ENCODE measurements at regions of chr7 and their contacts with region 1.

Region 1: GRCh38 chr7:141701489-141702046 is 398 bp downstream of the DENND11 start:
- DNase-seq: no peak
- H3K4me3 ChIP-seq: peak overlapping the region; percentile 65 to 84 (median 70)
- H3K27ac ChIP-seq: no peak overlapping the region
- H3K4me1 ChIP-seq: peaks cover 20% of the 10 kb centered on the region
- H3K27me3 ChIP-seq: no peaks in the 10 kb centered on the region
- CTCF ChIP-seq: no peak

Region 2: GRCh38 chr7:140966561-140967226 is 734.9 kb before region 1 on chr7:
- CTCF ChIA-PET with region 1: no interaction called
- dilution Hi-C with region 1: no loop called
- in situ Hi-C with region 1: no loop called
- intact Hi-C with region 1: no loop called
- DNase-seq: no peak
- H3K4me3 ChIP-seq: no peak overlapping the region
- H3K27ac ChIP-seq: no peak overlapping the region
- H3K4me1 ChIP-seq: no peaks in the 10 kb centered on the region
- H3K27me3 ChIP-seq: no peaks in the 10 kb centered on the region
- CTCF ChIP-seq: no peak

Region 3: GRCh38 chr7:141675436-141676215 is 25.9 kb before region 1 on chr7:
- CTCF ChIA-PET with region 1: no interaction called
- dilution Hi-C with region 1: no loop called
- in situ Hi-C with region 1: no loop called
- intact Hi-C with region 1: loop called (anchors 2 kb)
- DNase-seq: no peak
- H3K4me3 ChIP-seq: no peak overlapping the region
- H3K27ac ChIP-seq: no peak overlapping the region
- H3K4me1 ChIP-seq: peaks cover 25% of the 10 kb centered on the region
- H3K27me3 ChIP-seq: no peaks in the 10 kb centered on the region
- CTCF ChIP-seq: no peak

Region 4: DNA sequence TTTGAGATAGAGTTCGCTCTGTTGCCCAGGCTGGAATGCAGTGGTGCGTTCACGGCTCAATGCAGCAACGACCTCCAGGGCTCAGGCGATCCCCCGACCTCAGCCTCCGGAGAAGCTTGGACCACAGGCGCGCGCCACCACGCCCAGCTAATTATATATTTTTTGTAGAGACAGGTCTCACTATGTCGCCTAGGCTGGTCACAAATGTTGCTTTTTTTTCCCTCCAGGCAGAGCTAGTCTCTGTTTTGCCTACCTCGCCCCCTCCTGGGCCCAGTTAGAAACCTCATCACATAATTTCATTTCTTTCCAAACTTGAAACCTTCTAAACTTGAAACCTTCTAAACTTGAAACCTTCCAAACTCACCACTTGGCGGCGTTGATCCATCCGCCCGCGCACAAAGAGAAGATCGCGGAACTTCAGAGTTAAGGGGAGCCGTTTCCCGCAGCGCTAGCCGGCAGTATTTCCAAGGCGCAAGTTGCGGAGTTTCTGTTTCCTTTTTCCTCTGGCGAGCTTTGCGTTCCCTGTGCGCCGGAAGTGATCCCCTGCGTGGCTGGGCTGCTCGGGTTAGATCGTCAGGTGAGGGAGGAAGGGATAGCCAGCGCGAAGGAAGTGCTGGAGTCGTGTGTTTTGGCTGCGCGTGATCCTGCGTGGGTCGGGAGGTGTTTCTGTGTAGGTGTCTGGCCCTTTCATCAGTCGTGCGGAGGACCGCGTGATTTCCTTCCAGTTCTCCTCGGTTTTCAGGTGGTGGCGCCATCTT is 36.4 kb after region 1 on chr7 and contains the start of gene SSBP1:
- CTCF ChIA-PET with region 1: interaction called, 4 read pairs
- dilution Hi-C with region 1: no loop called
- in situ Hi-C with region 1: no loop called
- intact Hi-C with region 1: loop called (anchors 2 kb)
- DNase-seq: peak; percentile 94
- H3K4me3 ChIP-seq: peak within 1 kb of the TSS; percentile 95 to 98 (median 97)
- H3K27ac ChIP-seq: peak within 1 kb of the TSS; percentile 87
- H3K4me1 ChIP-seq: peaks cover 11% of the 10 kb centered on the region
- H3K27me3 ChIP-seq: no peaks in the 10 kb centered on the region
- CTCF ChIP-seq: peak; percentile 75 to 86
- total RNA-seq, gene SSBP1: 81.0 to 163 TPM

Region 5: DNA sequence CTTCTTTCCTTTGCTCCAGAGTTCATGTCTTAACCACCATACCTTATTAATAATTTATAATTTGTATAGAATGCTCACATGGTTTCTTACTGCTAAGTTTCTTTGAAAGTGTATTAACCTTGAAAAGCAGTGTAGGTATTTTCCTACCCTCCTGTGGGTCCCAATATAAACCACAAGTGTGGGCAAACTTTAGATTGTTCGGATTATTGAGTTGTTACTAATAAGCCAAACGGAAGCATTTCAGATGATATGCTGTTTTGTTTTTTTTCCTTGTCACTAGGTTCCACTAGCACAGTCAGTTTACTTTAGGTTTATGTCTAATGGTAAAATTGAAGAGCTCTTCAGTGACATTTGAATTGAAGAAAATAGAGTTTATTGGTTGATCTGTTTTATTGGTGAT is 46.8 kb after region 1 on chr7:
- CTCF ChIA-PET with region 1: no interaction called
- dilution Hi-C with region 1: loop called (anchors 5 kb)
- in situ Hi-C with region 1: no loop called
- intact Hi-C with region 1: no loop called
- DNase-seq: no peak
- H3K4me3 ChIP-seq: no peak overlapping the region
- H3K27ac ChIP-seq: no peak overlapping the region
- H3K4me1 ChIP-seq: no peaks in the 10 kb centered on the region
- H3K27me3 ChIP-seq: no peaks in the 10 kb centered on the region
- CTCF ChIP-seq: no peak

Region 6: DNA sequence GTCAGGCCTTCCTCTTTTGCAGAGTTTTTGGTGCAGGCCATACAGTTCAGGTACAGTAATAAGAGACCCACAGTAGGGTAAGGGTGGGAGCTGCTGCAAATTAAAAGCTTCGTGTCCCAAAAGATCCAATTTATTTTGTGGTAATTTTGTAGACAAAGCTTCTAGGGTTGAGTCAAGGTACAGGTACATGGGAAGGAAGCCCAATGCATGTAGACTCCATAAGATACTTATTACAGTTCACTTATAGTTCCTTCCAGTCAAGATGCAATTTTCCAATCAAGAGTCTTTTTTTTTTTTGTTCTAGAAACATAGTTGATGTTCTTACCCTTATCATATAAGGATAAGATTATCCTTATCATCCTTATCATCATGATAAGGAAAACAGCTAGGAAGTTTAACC is 74.8 kb after region 1 on chr7 and contains the start of gene TAS2R4:
- CTCF ChIA-PET with region 1: no interaction called
- dilution Hi-C with region 1: no loop called
- in situ Hi-C with region 1: no loop called
- intact Hi-C with region 1: no loop called
- DNase-seq: no peak
- H3K4me3 ChIP-seq: no peak within 1 kb of the TSS
- H3K27ac ChIP-seq: no peak within 1 kb of the TSS
- H3K4me1 ChIP-seq: no peaks in the 10 kb centered on the region
- H3K27me3 ChIP-seq: no peaks in the 10 kb centered on the region
- CTCF ChIP-seq: no peak
- total RNA-seq, gene TAS2R4: 1.6 to 3.8 TPM

Measured in mammary epithelial cell (primary cell).